Activated T-helper 2 cell treated with anti-CD3 and anti-CD28 coated beads, Interferon-gamma antibody, Interleukin-2, Interleukin-4, amounts not matched to agents 10 μg/mL and 5 μg/mL and 100 μg/mL, durations not matched to agents 14 hours and 24 hours and 36 hours (primary cell): ENCODE measurements at regions of chr2 and their contacts with region 1.

Region 1: GRCh38 chr2:230987137-230988020 is 8.5 kb upstream of the SPATA3 start:
- DNase-seq: peak; percentile 63
- H3K4me3 Mint-ChIP-seq: peak overlapping the region; percentile 58
- H3K27ac Mint-ChIP-seq: no peak overlapping the region
- H3K4me1 Mint-ChIP-seq: peaks cover 29% of the 10 kb centered on the region
- H3K27me3 Mint-ChIP-seq: peaks cover 40% of the 10 kb centered on the region

Region 2: GRCh38 chr2:230824406-230824978 is 162.9 kb before region 1 on chr2:
- intact Hi-C with region 1: loop called (anchors 1 kb)
- DNase-seq: peak; percentile 38
- H3K4me3 Mint-ChIP-seq: no peak overlapping the region
- H3K27ac Mint-ChIP-seq: no peak overlapping the region
- H3K4me1 Mint-ChIP-seq: peaks cover 16% of the 10 kb centered on the region
- H3K27me3 Mint-ChIP-seq: peaks cover 29% of the 10 kb centered on the region

Region 3: GRCh38 chr2:230902180-230902899 is 85.0 kb before region 1 on chr2:
- intact Hi-C with region 1: loop called (anchors 1 kb)
- DNase-seq: no peak
- H3K4me3 Mint-ChIP-seq: no peak overlapping the region
- H3K27ac Mint-ChIP-seq: no peak overlapping the region
- H3K4me1 Mint-ChIP-seq: peaks cover 33% of the 10 kb centered on the region
- H3K27me3 Mint-ChIP-seq: peaks cover 35% of the 10 kb centered on the region

Region 4: GRCh38 chr2:230924470-230925341 is 62.7 kb before region 1 on chr2 and contains the start of gene GPR55:
- intact Hi-C with region 1: loop called (anchors 1 kb)
- DNase-seq: peak; percentile 26
- H3K4me3 Mint-ChIP-seq: peak within 1 kb of the TSS; percentile 69
- H3K27ac Mint-ChIP-seq: peak within 1 kb of the TSS; percentile 78
- H3K4me1 Mint-ChIP-seq: peaks cover 51% of the 10 kb centered on the region
- H3K27me3 Mint-ChIP-seq: peaks cover 32% of the 10 kb centered on the region
- total RNA-seq, gene GPR55: 0.57 and 0.78 TPM in 2 replicates

Region 5: DNA sequence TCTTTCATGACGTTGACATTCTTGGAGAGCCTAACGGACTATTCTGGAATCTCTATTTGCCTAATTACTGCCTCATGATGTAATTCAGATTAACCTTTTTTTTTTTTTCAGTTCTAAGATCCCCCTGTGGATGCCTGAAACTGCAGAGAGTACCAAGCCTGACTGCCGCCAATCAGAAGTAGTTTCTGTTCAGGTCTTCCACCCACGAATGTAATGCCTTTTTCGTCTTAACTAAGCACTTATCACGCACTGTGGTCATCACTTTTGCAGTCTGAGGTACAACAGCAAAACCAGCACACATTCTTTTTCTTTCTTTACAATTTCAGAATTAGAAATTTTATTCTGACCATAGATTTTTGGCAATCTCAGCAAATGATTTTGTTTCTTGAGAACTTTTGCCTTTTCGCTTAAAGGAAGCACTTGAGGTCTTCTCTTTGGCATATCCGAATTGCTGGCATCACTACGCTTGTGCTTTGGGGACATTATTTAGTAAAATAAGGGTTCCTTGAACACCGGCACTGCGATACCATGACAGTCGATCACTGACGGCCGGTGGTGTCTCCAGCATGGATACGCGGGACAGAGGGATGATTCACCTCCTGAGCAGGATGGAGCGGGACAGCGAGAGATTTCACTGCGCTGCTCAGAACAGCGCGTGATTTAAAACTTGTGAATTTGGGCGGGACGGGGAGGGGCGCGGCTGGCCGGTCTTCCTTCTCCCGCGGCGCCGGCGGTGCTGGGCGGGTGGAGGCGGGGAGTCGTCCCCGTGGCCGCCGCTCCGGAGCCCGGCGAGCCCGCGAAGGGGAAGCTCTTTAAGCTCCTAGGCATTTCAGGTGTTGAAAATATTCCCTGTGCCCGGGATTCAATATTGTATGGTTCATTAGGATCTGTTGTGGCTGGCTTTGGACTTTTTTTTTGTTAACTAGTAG is 30.3 kb before region 1 on chr2:
- intact Hi-C with region 1: loop called (anchors 1 kb)
- DNase-seq: no peak
- H3K4me3 Mint-ChIP-seq: peak overlapping the region; percentile 86
- H3K27ac Mint-ChIP-seq: peak overlapping the region; percentile 85
- H3K4me1 Mint-ChIP-seq: peaks cover 42% of the 10 kb centered on the region
- H3K27me3 Mint-ChIP-seq: peaks cover 71% of the 10 kb centered on the region

Region 6: DNA sequence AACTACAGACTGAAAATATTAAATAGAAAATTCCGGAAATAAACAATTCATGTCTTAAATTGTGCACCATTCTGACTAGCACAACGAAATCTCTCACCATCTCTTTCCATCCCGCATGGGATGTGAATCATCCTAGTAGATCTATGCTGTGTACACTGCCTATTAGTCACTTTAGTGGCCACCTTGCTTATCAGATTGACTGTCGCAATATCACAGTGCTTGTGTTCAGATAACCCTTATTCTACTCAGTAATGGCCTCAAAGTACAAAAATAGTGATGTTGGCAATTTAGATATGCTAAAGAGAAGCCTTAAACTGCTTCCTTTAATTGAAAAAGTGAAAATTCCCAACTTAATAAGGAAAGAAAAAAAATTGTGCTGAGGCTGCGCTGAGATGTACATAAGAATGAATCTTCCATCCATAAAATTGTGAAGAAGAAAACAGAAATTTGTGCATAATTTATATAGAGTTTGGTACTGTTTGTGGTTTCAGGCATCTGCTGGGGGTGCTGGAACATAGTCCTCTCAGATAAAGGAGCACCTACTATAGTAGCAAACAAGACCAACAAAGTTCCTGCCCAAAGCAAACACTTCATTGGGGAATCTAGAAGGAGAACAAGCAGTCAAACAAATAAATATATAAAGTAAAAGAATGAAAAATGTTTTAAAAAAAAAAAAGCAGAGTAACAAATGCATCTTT is 81.3 kb after region 1 on chr2:
- intact Hi-C with region 1: loop called (anchors 2 kb)
- DNase-seq: no peak
- H3K4me3 Mint-ChIP-seq: peak overlapping the region; percentile 33
- H3K27ac Mint-ChIP-seq: peak overlapping the region; percentile 85
- H3K4me1 Mint-ChIP-seq: peaks cover 22% of the 10 kb centered on the region
- H3K27me3 Mint-ChIP-seq: no peaks in the 10 kb centered on the region